Lower leg skin (tissue), 4 donors: ENCODE measurements at regions of chr11 and their contacts with region 1.

Region 1: DNA sequence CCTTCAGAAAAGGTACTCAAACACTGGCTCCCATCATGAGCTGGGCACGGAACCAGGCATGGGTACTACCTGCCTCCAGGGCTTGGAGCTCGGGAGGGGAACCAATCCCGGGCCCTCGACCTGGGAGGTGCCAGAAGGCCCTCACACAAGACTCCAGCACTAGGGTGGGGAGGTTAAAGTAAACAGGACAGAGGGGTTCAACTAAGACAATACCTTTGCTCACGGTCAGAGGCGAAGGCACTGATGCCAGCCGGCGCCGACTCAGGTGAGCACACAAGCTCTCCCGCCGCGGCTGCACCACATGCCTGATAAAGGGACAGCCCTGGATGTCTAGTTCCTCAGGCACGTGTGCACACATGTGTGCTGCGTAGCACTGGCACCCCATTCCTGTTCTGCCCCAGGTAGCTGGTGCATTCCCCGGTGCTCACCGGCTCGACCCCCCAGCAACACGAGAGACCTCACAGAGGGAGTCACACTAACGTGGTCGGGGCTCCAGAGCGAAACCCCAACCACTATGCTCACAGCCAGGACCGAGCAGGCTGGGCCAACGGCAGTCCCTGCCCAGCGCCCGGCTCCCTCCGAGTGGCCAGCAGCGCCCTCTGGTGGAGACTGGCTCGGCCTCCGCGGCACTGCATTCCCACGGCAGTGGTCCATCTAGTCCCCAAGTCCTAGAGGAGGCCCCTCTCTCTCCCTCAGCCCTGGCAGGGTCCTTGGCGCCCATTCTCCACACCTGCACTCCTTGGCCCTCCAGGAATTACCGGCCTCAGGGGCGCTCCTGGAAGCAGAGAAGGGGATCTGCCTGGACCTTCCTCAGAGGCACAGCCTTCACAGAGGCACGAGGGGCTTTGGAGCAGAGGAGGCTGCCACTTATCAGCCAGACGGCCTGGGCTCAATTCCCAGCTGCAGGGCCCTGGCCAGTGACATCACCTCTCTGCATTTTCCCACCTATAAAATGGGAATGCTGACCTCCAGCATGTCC is 28.8 kb upstream of the MOB2 start:
- DNase-seq: peak; percentile 55 to 96
- H3K4me3 ChIP-seq: no peak overlapping the region
- CTCF ChIP-seq: peak in 1 of 3 donors; percentile 39
- POLR2A ChIP-seq: no peak

Region 2: GRCh38 chr11:1202776-1203504 is 312.4 kb before region 1 on chr11:
- intact Hi-C with region 1: loop called (anchors 10 kb)
- DNase-seq: peak in 1 of 2 donors; percentile 89
- H3K4me3 ChIP-seq: no peak overlapping the region
- CTCF ChIP-seq: peak in 1 of 3 donors; percentile 63
- POLR2A ChIP-seq: no peak

Region 3: DNA sequence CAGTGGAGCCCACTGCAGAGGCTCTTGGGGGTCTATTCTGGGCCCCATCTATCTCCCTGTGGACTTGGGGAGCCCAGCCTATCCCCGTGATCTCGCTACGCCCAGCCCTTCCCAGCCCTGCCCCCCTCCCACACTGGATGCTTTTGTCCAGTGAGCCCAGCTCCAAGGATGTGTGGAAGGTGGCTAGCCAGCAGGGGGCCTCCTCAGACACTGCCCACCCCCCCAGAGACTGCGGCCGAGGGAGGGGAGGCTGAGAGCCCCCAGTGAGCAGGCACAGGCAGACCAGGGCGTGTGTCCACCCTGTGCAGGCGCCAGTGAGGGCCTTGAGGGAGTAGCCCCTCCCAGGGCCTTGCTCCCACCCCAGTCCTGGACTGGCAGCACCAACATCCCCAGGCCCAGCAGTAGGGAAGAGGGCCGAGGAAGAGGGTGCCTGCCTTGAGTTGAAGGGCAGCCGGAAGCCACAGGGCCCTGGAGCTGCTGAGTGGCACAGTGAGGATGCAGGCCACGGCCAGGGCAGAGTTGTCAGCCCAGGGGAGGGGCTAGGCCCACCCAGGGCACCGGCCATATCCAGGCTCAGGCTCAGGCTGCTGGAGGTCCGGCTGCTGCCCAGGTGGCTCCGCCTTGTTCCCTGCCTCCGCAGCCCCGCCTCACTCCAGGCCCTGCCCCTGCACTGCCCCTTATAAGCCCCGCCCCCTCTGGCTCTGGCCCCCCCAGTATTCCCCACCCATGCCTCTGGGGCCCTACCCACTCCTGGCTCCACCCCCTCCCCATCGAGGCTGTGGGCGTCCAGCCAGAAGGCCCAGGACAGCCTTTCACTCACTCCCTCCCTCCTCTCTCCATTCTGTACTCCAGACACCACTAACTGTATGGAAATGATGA is 56.8 kb before region 1 on chr11:
- intact Hi-C with region 1: loop called (anchors 10 kb)
- DNase-seq: no peak
- H3K4me3 ChIP-seq: no peak overlapping the region
- CTCF ChIP-seq: no peak
- POLR2A ChIP-seq: no peak

Region 4: DNA sequence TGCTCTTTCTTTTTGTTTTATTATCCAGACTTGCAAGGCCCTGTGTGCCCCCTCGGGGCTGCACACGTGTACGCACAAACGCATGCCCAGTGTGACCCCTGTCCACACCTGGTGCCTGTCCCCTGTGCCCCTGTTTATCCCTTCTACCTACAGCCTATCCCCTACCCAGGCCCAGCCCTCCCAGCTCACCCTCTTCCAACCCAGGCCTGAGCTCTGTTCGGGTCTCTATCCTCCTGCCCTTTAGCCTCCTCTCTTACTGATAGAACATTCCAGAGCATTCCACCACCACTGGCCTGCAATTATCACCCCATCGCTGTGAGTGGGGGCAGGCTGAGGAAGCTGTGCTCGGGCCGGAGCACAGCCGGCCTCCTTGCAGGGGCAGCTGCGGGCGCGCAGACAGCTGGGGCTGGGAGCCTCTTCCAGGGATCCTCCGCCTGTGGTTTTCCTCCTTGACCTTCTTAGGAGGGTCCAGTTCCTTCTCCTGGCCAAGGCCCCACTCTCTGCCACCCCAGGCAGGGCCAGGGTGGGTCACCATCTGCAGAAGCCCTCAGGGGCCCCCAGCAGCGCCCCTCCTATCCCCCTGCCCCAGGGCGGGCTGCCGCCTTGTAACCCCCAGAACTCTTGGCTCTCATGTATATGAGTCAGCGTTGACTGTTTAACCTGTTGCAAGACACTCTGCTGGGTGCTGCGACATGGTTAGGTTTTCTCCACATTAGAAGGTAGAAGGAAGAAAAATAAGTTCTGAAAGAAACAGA is 1226.2 kb after region 1 on chr11:
- intact Hi-C with region 1: no loop called
- DNase-seq: no peak
- H3K4me3 ChIP-seq: no peak overlapping the region
- CTCF ChIP-seq: no peak
- POLR2A ChIP-seq: no peak